ENCODE measurements at regions of chr15 and their contacts with region 1.

Region 1: GRCh38 chr15:86278586-86278985 is 198.9 kb downstream of the AGBL1 start:
- DNase-seq: no peak
- ATAC-seq: no peak
- H3K4me3 ChIP-seq: no peak overlapping the region
- H3K27ac ChIP-seq: no peak overlapping the region
- H3K4me1 ChIP-seq: no peaks in the 10 kb centered on the region
- H3K27me3 ChIP-seq: no peaks in the 10 kb centered on the region
- CTCF ChIP-seq: no peak

Region 2: GRCh38 chr15:86201313-86202008 is 77.1 kb before region 1 on chr15:
- CTCF ChIA-PET with region 1: no interaction called
- POLR2A ChIA-PET with region 1: no interaction called
- in situ Hi-C with region 1: no loop called
- intact Hi-C with region 1: no loop called
- DNase-seq: no peak
- ATAC-seq: no peak
- H3K4me3 ChIP-seq: no peak overlapping the region
- H3K27ac ChIP-seq: no peak overlapping the region
- H3K4me1 ChIP-seq: no peaks in the 10 kb centered on the region
- H3K27me3 ChIP-seq: no peaks in the 10 kb centered on the region
- CTCF ChIP-seq: no peak

Region 3: GRCh38 chr15:86300390-86301125 is 22.0 kb after region 1 on chr15:
- CTCF ChIA-PET with region 1: no interaction called
- POLR2A ChIA-PET with region 1: interaction called, 12 read pairs
- in situ Hi-C with region 1: no loop called
- intact Hi-C with region 1: no loop called
- DNase-seq: no peak
- ATAC-seq: no peak
- H3K4me3 ChIP-seq: no peak overlapping the region
- H3K27ac ChIP-seq: no peak overlapping the region
- H3K4me1 ChIP-seq: no peaks in the 10 kb centered on the region
- H3K27me3 ChIP-seq: no peaks in the 10 kb centered on the region
- CTCF ChIP-seq: no peak

Region 4: GRCh38 chr15:86481720-86482119 is 203.1 kb after region 1 on chr15:
- CTCF ChIA-PET with region 1: no interaction called
- POLR2A ChIA-PET with region 1: no interaction called
- in situ Hi-C with region 1: no loop called
- intact Hi-C with region 1: no loop called
- DNase-seq: no peak
- ATAC-seq: no peak
- H3K4me3 ChIP-seq: no peak overlapping the region
- H3K27ac ChIP-seq: no peak overlapping the region
- H3K4me1 ChIP-seq: no peaks in the 10 kb centered on the region
- H3K27me3 ChIP-seq: no peaks in the 10 kb centered on the region
- CTCF ChIP-seq: no peak

Measured in Panc1 (cell line).